Astrocyte of the cerebellum (primary cell): ENCODE measurements at regions of chr7 and their contacts with region 1.

Region 1: GRCh38 chr7:80095545-80095944 is 39.1 kb upstream of the GNAI1 start:
- DNase-seq: no peak
- H3K4me3 ChIP-seq: no peak overlapping the region
- CTCF ChIP-seq: peak; percentile 26

Region 2: DNA sequence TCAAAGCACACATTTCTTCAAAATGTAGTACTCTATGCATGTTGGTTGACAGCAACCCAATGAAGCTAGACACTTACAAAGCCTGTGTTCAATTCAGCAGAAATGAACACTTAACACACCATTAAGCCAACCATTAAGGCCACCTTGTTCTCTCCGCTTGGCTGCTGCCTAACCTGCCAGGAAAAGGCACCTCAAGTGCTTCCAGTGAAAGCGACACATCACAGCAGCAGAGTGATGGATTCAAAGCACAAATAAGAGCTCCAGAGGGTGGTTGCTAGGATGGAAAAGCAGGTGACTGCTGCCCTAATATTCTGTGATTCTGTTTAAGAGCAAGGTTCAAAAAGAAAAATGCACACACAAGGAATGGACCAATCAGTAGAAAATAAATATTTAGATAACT is 42.4 kb before region 1 on chr7:
- in situ Hi-C with region 1: loop called (anchors 5 kb)
- DNase-seq: no peak
- H3K4me3 ChIP-seq: no peak overlapping the region
- CTCF ChIP-seq: no peak